Activated B cell treated with CpG ODN at 0.5 μM for 24 hours (primary cell): ENCODE measurements at regions of chr17 and their contacts with region 1.

Region 1: GRCh38 chr17:56715613-56716357 is 117.9 kb downstream of the C17orf67 start:
- DNase-seq: peak; percentile 38
- ATAC-seq: peak; percentile 87
- H3K4me3 Mint-ChIP-seq: no peak overlapping the region
- H3K27ac Mint-ChIP-seq: no peak overlapping the region
- H3K4me1 Mint-ChIP-seq: peaks cover 3% of the 10 kb centered on the region
- H3K27me3 Mint-ChIP-seq: no peaks in the 10 kb centered on the region
- CTCF ChIP-seq: peak; percentile 56

Region 2: GRCh38 chr17:55774846-55775271 is 940.9 kb before region 1 on chr17:
- CTCF ChIA-PET with region 1: no interaction called
- POLR2A ChIA-PET with region 1: no interaction called
- intact Hi-C with region 1: no loop called
- DNase-seq: no peak
- ATAC-seq: no peak
- H3K4me3 Mint-ChIP-seq: no peak overlapping the region
- H3K27ac Mint-ChIP-seq: no peak overlapping the region
- H3K4me1 Mint-ChIP-seq: no peaks in the 10 kb centered on the region
- H3K27me3 Mint-ChIP-seq: no peaks in the 10 kb centered on the region
- CTCF ChIP-seq: no peak

Region 3: DNA sequence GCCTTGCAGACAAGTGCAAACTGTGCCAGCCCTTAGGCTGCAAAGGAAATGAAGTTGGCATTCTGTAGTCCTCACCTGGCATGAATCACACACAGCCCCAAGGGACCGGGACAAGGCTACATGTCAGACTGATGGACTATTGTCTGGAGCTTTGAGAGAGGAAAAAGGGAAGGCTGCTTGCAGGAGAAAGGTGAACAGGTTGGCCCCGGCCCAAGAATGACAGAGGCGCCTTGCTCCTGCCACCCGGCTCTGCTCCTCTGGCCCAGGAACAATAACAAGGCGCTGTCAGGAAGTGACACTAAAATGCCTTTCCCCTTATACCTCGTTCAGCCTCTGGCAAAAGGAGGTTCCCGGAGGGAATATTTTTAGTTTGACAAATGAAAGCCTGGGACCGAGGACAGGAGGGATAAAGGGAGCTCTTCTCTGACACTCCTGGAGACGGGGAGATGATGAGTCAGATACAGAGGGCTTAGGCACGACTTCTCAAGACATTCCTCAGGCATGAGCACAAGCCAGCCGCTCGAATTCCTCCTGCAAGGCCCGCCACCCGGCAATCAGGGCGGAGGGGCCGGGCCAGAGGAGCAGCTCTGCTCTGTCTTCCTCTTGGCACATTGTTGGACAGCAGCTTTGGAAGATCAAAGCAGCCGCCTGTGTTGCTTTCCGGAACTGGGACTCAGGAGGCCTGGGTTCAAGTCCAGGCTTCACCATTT is 16.4 kb before region 1 on chr17:
- CTCF ChIA-PET with region 1: interaction called, 14 read pairs
- POLR2A ChIA-PET with region 1: no interaction called
- intact Hi-C with region 1: no loop called
- DNase-seq: no peak
- ATAC-seq: no peak
- H3K4me3 Mint-ChIP-seq: no peak overlapping the region
- H3K27ac Mint-ChIP-seq: no peak overlapping the region
- H3K4me1 Mint-ChIP-seq: no peaks in the 10 kb centered on the region
- H3K27me3 Mint-ChIP-seq: peaks cover 11% of the 10 kb centered on the region
- CTCF ChIP-seq: no peak

Region 4: DNA sequence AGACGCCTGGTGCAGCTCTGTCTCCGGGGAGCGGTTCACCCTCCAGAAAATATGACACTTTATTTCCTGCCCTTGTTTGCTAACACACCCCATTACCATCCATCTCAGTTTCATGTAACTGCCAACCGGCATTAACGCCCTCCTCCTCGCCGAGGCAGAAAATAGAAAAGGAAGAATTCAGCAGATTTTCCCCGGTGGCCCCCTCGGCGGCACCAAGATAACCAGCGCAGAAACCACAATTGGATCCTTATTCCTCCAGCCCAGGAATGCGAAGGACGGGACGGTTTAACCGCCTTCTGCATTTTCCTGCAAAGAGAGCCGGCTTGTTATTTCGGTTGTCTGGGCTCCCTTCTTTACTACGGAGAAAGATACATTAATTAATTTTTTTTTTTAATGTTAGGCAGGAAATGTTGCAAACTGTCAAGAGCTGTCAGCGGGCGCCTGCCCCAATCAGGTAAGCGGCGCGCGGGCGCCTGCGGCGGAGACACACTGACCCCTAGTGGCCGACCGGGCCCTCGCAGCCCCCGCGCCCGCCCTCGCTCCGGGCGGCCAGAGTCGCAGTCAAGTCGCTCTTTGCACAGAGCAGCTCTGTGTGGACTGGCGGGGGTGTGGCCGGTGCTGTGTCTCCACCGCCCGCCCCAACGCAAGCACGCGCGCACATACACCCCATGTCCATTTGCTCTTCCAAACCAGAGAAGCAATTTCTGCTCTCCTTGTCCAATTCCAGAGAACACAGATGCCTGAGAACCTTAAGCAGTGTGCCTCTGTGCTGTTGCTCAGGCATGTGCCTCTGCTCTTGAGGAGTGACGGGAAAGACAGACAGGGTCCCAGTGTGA is 64.3 kb after region 1 on chr17:
- CTCF ChIA-PET with region 1: interaction called, 9 read pairs
- POLR2A ChIA-PET with region 1: no interaction called
- intact Hi-C with region 1: loop called (anchors 1 kb)
- DNase-seq: peak; percentile 80
- ATAC-seq: peak; percentile 99
- H3K4me3 Mint-ChIP-seq: peak overlapping the region; percentile 85
- H3K27ac Mint-ChIP-seq: peak overlapping the region; percentile 3
- H3K4me1 Mint-ChIP-seq: peaks cover 10% of the 10 kb centered on the region
- H3K27me3 Mint-ChIP-seq: peaks cover 34% of the 10 kb centered on the region
- CTCF ChIP-seq: peak; percentile 99